PC-3 (cell line): ENCODE measurements at regions of chr1 and their contacts with region 1.

Region 1: GRCh38 chr1:29912425-29912824 is 676.1 kb downstream of the PTPRU start:
- DNase-seq: peak; percentile 44
- ATAC-seq: no peak
- H3K4me3 ChIP-seq: no peak overlapping the region
- H3K27ac ChIP-seq: no peak overlapping the region
- H3K4me1 ChIP-seq: no peaks in the 10 kb centered on the region
- H3K27me3 ChIP-seq: peaks cover 60% of the 10 kb centered on the region
- CTCF ChIP-seq: peak; percentile 66

Region 2: DNA sequence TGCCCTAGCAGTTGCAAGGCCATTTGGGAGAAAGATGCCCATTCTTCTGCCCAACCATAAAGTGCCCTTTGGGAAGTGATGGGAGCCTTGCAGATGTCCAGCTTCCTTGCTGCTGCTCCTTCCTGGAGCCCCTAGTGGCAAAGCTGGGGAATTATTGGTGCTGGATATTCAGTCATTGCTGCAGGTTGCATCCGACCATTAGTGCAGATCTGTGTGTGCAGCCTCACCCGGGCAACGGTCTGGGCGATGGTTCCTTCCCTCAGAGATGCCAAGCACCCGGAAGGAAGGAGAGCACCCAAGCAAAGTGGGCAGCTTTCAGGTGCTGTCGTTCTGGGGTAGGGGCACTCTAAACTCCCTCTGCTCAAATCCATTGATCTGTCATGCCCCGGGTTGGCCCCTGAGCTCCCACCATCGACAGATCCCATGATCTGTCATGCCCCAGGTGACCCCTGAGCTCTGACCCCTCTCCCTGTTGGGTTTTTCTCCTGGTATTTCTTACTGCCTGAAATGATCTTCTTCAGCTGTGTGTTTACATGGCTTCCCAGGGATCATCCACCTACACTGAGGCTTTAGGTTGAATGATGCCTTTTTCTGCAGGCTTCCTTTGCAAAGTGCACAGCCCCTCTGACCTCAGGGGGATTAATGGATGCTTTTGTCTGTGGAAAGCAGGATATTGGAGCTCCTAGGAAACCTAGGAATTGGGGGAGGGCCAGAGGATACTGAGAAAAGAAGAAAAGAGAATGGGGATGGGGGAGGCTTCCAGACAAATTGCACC is 208.6 kb before region 1 on chr1:
- CTCF ChIA-PET with region 1: no interaction called
- POLR2A ChIA-PET with region 1: no interaction called
- intact Hi-C with region 1: no loop called
- DNase-seq: peak; percentile 59
- ATAC-seq: peak; percentile 54
- H3K4me3 ChIP-seq: no peak overlapping the region
- H3K27ac ChIP-seq: no peak overlapping the region
- H3K4me1 ChIP-seq: peaks cover 13% of the 10 kb centered on the region
- H3K27me3 ChIP-seq: no peaks in the 10 kb centered on the region
- CTCF ChIP-seq: peak; percentile 78

Region 3: DNA sequence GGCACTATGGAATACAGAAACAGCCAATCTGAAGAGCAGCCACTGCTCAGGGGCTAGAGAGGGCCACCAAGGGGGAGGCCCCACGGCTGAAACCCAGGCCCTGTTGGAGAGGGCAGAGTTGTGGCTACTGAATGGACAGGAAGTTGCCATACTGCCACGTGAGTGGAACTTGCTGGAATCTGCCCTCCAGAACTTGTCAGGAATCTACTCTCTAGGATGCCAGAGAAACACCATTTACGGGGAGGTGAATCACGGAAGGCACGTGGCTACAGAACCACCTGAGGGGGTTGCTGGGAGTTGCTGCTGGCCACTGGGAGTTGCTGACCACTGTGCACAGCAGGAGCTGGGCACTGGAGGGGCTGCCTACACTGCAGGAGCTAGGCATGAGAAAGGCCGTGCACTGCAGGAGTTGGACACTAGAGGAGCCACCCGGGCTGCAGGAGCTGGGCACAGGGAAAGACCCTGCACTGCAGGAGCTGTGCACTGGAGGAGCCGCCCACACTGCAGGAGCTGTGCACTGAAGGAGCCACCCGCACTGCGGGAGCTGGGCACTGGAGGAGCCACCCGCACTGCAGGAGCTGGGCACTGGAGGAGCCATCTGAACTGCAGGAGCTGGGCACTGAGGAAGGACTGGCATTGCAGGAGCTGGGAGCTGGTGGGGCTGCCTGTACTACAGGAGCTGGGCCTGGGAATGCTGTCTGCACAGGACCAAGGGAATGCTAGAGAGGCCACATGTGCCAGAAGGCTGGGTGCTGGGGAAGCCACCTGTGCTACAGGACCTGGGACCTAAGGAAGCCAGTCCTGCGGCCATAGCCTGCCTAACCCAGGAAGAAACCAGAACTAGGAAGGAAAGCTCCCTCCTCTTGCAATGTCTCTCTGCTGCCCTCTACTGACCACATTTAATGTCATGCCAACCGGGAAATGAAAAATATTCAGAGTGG is 467.5 kb after region 1 on chr1:
- CTCF ChIA-PET with region 1: no interaction called
- POLR2A ChIA-PET with region 1: no interaction called
- intact Hi-C with region 1: loop called (anchors 10 kb)
- DNase-seq: peak; percentile 78
- ATAC-seq: peak; percentile 80
- H3K4me3 ChIP-seq: no peak overlapping the region
- H3K27ac ChIP-seq: no peak overlapping the region
- H3K4me1 ChIP-seq: no peaks in the 10 kb centered on the region
- H3K27me3 ChIP-seq: peaks cover 12% of the 10 kb centered on the region; the same call in 1 of the 2 replicates
- CTCF ChIP-seq: peak; percentile 78